Posterior cingulate gyrus (tissue), 11 donors: ENCODE measurements at regions of chr16 and their contacts with region 1.

Region 1: GRCh38 chr16:30526823-30527635 is 663 bp upstream of the ZNF768 start:
- DNase-seq: peak; percentile 94 to 100 (median 98)

Region 2: GRCh38 chr16:30091474-30092372 is 435.3 kb before region 1 on chr16 and contains the start of gene TBX6:
- intact Hi-C with region 1: loop called (anchors 10 kb)
- DNase-seq: peak; percentile 87 to 99 (median 94)

Region 3: GRCh38 chr16:30445408-30446202 is 81.4 kb before region 1 on chr16 and contains the start of gene SEPHS2:
- intact Hi-C with region 1: loop called (anchors 5 kb)
- DNase-seq: peak; percentile 91 to 99 (median 96)

Region 4: GRCh38 chr16:30557957-30558788 is 31.1 kb after region 1 on chr16 and contains the start of gene ZNF764:
- intact Hi-C with region 1: loop called (anchors 2 kb)
- DNase-seq: peak; percentile 98 to 100 (median 98)

Region 5: GRCh38 chr16:30571695-30572600 is 44.9 kb after region 1 on chr16 and contains the start of gene ZNF688:
- intact Hi-C with region 1: no loop called
- DNase-seq: peak; percentile 90 to 99 (median 95)

Region 6: GRCh38 chr16:30657866-30658730 is 131.1 kb after region 1 on chr16 and contains the start of gene FBRS:
- intact Hi-C with region 1: loop called (anchors 5 kb)
- DNase-seq: peak; percentile 99 to 100 (median 100)